ENCODE measurements at regions of chr14 and their contacts with region 1.

Region 1: GRCh38 chr14:63770187-63770807 is 42.4 kb upstream of the SGPP1 start:
- DNase-seq: peak in 1 of 2 experiments; percentile 54
- H3K4me3 ChIP-seq: no peak overlapping the region
- H3K4me3 Mint-ChIP-seq: no peak overlapping the region
- H3K27ac Mint-ChIP-seq: no peak overlapping the region
- H3K4me1 ChIP-seq: peaks cover 4% of the 10 kb centered on the region; the same call in 1 of the 2 replicates
- H3K4me1 Mint-ChIP-seq: peaks cover 7% of the 10 kb centered on the region
- H3K27me3 ChIP-seq: no peaks in the 10 kb centered on the region
- H3K27me3 Mint-ChIP-seq: no peaks in the 10 kb centered on the region
- CTCF ChIP-seq: peak; percentile 59 to 69

Region 2: GRCh38 chr14:63388763-63389431 is 381.4 kb before region 1 on chr14:
- CTCF ChIA-PET with region 1: interaction called, 3 read pairs
- POLR2A ChIA-PET with region 1: no interaction called
- intact Hi-C with region 1: loop called (anchors 10 kb)
- DNase-seq: peak; percentile 46 to 57
- H3K4me3 ChIP-seq: no peak overlapping the region
- H3K4me3 Mint-ChIP-seq: no peak overlapping the region
- H3K27ac Mint-ChIP-seq: no peak overlapping the region
- H3K4me1 ChIP-seq: no peaks in the 10 kb centered on the region
- H3K4me1 Mint-ChIP-seq: no peaks in the 10 kb centered on the region
- H3K27me3 ChIP-seq: no peaks in the 10 kb centered on the region
- H3K27me3 Mint-ChIP-seq: no peaks in the 10 kb centered on the region
- CTCF ChIP-seq: peak; percentile 56 to 79

Region 3: DNA sequence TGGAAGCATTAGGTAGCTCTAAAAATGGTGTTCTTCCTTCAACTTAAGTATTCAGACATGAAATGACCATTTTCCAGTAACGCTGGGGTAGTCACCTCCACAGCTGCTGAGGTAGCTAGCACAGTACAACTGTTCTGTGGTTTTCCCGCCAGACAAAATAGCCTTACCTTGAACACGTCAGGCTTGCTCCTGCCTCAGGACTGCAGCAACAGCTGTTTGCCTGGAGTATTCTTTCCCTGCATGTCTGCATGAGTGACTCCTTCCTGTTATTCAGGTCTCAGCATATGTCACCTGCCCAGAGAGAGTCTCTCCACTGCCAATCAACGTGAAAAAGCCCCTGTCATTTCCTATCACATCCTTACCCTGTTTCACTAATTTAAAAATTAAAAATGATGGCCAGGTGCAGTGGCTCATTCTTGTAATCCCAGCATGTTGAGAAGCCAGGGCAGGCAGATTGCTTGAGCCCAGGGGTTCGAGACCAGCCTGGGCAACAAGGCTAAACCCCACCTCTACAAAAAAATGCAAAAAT is 166.5 kb before region 1 on chr14:
- CTCF ChIA-PET with region 1: no interaction called
- POLR2A ChIA-PET with region 1: no interaction called
- intact Hi-C with region 1: no loop called
- DNase-seq: no peak
- H3K4me3 ChIP-seq: no peak overlapping the region
- H3K4me3 Mint-ChIP-seq: no peak overlapping the region
- H3K27ac Mint-ChIP-seq: no peak overlapping the region
- H3K4me1 ChIP-seq: no peaks in the 10 kb centered on the region
- H3K4me1 Mint-ChIP-seq: no peaks in the 10 kb centered on the region
- H3K27me3 ChIP-seq: no peaks in the 10 kb centered on the region
- H3K27me3 Mint-ChIP-seq: no peaks in the 10 kb centered on the region
- CTCF ChIP-seq: no peak

Region 4: GRCh38 chr14:63632932-63633514 is 137.3 kb before region 1 on chr14:
- CTCF ChIA-PET with region 1: interaction called, 3 read pairs
- POLR2A ChIA-PET with region 1: no interaction called
- intact Hi-C with region 1: loop called (anchors 2 kb)
- DNase-seq: no peak
- H3K4me3 ChIP-seq: no peak overlapping the region
- H3K4me3 Mint-ChIP-seq: no peak overlapping the region
- H3K27ac Mint-ChIP-seq: no peak overlapping the region
- H3K4me1 ChIP-seq: no peaks in the 10 kb centered on the region
- H3K4me1 Mint-ChIP-seq: no peaks in the 10 kb centered on the region
- H3K27me3 ChIP-seq: no peaks in the 10 kb centered on the region
- H3K27me3 Mint-ChIP-seq: no peaks in the 10 kb centered on the region
- CTCF ChIP-seq: peak; percentile 44 to 53

Region 5: GRCh38 chr14:63641473-63642228 is 128.6 kb before region 1 on chr14 and contains the start of gene WDR89:
- CTCF ChIA-PET with region 1: interaction called, 11 read pairs
- POLR2A ChIA-PET with region 1: interaction called, 4 read pairs
- intact Hi-C with region 1: loop called (anchors 2 kb)
- DNase-seq: peak; percentile 97 to 99
- H3K4me3 ChIP-seq: peak within 1 kb of the TSS; percentile 67
- H3K4me3 Mint-ChIP-seq: peak within 1 kb of the TSS; percentile 88
- H3K27ac Mint-ChIP-seq: peak within 1 kb of the TSS; percentile 96
- H3K4me1 ChIP-seq: no peaks in the 10 kb centered on the region
- H3K4me1 Mint-ChIP-seq: no peaks in the 10 kb centered on the region
- H3K27me3 ChIP-seq: no peaks in the 10 kb centered on the region
- H3K27me3 Mint-ChIP-seq: no peaks in the 10 kb centered on the region
- CTCF ChIP-seq: peak; percentile 77 to 85
- total RNA-seq, gene WDR89: 14.4 and 16.6 TPM in 2 replicates

Measured in Caco-2 (cell line).